K562 (cell line): ENCODE measurements at regions of chr6 and their contacts with region 1.

Region 1: GRCh38 chr6:107459283-107460082 is at the start of gene PDSS2:
- DNase-seq: peak; percentile 98 to 99 (median 98)
- ATAC-seq: peak; percentile 96
- H3K4me3 ChIP-seq: peak within 1 kb of the TSS; percentile 60
- H3K27ac ChIP-seq: peak within 1 kb of the TSS; percentile 91
- H3K4me1 ChIP-seq: peaks cover 5 to 10% of the 10 kb centered on the region in 2 experiments; a peak in 4 of 5 replicates
- H3K27me3 ChIP-seq: no peaks in the 10 kb centered on the region
- CTCF ChIP-seq: peak; percentile 72 to 80 (median 74)
- EP300 ChIP-seq: 0 out of 2 replicates have a peak, but pooled peaks have one; percentile 23
- POLR2A ChIP-seq: peak; percentile 91
- RAD21 ChIP-seq: peak; percentile 42 to 50
- polyA plus RNA-seq, gene PDSS2: 16.9 to 21.1 TPM

Region 2: GRCh38 chr6:107064579-107065065 is 394.9 kb before region 1 on chr6:
- CTCF ChIA-PET with region 1: no interaction called
- POLR2A ChIA-PET with region 1: no interaction called
- in situ Hi-C with region 1: no loop called
- intact Hi-C with region 1: no loop called
- DNase-seq: peak in 1 of 4 experiments; percentile 36
- ATAC-seq: peak; percentile 60
- H3K4me3 ChIP-seq: no peak overlapping the region
- H3K27ac ChIP-seq: no peak overlapping the region
- H3K4me1 ChIP-seq: peaks cover 0 to 9% of the 10 kb centered on the region in 2 experiments; a peak in 4 of 5 replicates
- H3K27me3 ChIP-seq: peaks cover 4 to 6% of the 10 kb centered on the region in 2 experiments; a peak in 4 of 5 replicates
- CTCF ChIP-seq: no peak
- EP300 ChIP-seq: no peak
- POLR2A ChIP-seq: no peak
- RAD21 ChIP-seq: no peak

Region 3: DNA sequence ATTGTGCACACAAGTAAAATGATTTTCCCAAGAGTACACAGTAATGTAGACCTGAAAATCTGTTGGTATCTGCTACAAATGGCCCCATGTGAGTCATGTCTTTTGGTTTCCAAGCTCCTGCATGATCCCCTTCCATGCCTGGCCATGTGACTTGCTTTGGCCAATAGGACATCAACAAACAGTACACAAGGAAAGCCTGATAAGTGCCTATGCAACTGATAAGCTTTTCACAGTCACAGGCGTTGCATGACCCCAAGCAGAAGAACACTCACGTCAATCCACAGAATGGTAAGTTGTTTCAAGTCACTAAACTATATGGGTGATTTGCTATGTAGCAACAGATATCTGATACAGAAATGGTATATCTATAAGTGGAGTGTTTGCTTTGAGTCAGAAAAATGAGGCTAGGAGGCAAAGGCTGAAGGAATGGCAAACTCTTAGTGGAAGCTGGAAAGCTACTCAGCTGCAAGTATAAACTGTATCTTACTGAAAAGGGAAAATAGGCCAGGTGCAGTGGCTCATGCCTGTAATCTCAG is 184.1 kb before region 1 on chr6:
- CTCF ChIA-PET with region 1: no interaction called
- POLR2A ChIA-PET with region 1: interaction called, 6 read pairs
- in situ Hi-C with region 1: no loop called
- intact Hi-C with region 1: loop called (anchors 5 kb)
- DNase-seq: peak; percentile 92 to 95 (median 94)
- ATAC-seq: peak; percentile 96
- H3K4me3 ChIP-seq: peak overlapping the region; percentile 8; the same call in 1 of the 2 replicates
- H3K27ac ChIP-seq: peak overlapping the region; percentile 78; the same call in 2 of the 3 replicates
- H3K4me1 ChIP-seq: peaks cover 25 to 31% of the 10 kb centered on the region in 2 experiments
- H3K27me3 ChIP-seq: no peaks in the 10 kb centered on the region
- CTCF ChIP-seq: no peak
- EP300 ChIP-seq: peak; percentile 84
- POLR2A ChIP-seq: no peak
- RAD21 ChIP-seq: no peak

Region 4: DNA sequence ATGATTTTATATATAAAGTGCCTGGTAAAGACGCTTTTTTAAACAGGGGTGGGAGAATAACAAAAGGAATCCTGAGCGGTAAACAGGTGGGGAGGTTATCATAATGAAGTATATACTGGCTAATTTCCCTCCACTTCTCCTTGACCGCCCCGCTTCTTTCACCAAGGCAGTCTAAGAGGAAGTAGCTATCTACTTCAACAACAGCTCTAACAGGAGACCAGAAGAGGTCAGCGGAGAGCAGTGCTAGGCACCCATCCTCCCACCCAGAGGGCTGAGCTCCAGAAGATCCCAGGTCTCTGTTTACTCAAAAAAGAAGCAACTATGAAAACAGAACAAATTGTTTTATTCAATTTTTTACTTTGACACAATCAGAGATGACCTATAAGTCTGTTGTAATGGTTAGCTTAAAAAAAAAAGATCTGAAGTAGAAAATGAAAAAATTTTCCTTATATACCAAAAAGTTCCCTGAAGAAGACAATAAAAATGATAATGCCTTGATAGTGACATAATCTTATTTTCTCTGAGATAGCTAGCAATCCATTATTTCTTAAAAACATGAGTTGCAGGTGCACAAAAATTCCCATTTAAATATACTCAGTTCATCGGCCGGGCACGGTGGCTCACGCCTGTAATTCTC is 141.3 kb before region 1 on chr6:
- CTCF ChIA-PET with region 1: no interaction called
- POLR2A ChIA-PET with region 1: interaction called, 4 read pairs
- in situ Hi-C with region 1: no loop called
- intact Hi-C with region 1: loop called (anchors 1 kb)
- DNase-seq: peak; percentile 43 to 76 (median 61)
- ATAC-seq: peak; percentile 100
- H3K4me3 ChIP-seq: no peak overlapping the region
- H3K27ac ChIP-seq: no peak overlapping the region
- H3K4me1 ChIP-seq: no peaks in the 10 kb centered on the region
- H3K27me3 ChIP-seq: no peaks in the 10 kb centered on the region
- CTCF ChIP-seq: peak; percentile 73 to 85 (median 80)
- EP300 ChIP-seq: no peak
- POLR2A ChIP-seq: no peak
- RAD21 ChIP-seq: peak; percentile 72 to 88

Region 5: DNA sequence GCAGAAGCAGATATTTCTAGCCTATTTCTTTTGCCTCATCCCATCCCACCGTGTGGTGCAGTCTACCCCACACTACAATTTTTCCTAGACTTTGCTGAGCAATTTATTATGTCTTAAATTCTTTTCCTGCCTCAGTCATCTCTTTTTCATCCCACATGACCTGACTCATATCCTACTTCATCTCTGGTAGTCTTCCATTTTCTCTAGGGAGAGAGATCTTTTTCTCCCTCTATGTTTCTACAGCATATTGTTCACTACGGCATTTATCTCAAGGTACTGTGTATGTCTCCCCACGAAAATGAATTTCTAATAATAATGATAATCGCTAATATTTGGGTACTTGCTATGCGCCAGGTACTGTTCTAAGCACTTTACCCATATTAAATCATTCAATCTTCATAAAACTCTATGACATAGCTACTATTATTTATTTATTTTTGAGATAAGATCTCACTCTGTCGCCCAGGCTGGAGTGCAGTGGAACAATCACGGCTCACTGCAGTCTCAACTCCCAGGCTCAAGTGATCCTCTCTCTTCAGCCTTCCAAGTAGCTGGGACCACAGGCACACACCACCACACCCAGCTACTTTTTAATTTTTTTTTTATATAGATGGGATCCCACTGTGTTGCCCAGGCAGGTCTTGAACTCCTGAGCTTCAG is 15.7 kb before region 1 on chr6:
- CTCF ChIA-PET with region 1: no interaction called
- POLR2A ChIA-PET with region 1: interaction called, 12 read pairs
- in situ Hi-C with region 1: no loop called
- intact Hi-C with region 1: no loop called
- DNase-seq: no peak
- ATAC-seq: no peak
- H3K4me3 ChIP-seq: no peak overlapping the region
- H3K27ac ChIP-seq: no peak overlapping the region
- H3K4me1 ChIP-seq: no peaks in the 10 kb centered on the region
- H3K27me3 ChIP-seq: no peaks in the 10 kb centered on the region
- CTCF ChIP-seq: no peak
- EP300 ChIP-seq: no peak
- POLR2A ChIP-seq: no peak
- RAD21 ChIP-seq: no peak

Region 6: GRCh38 chr6:107473660-107474059 is 14.2 kb after region 1 on chr6:
- CTCF ChIA-PET with region 1: no interaction called
- POLR2A ChIA-PET with region 1: interaction called, 18 read pairs
- in situ Hi-C with region 1: no loop called
- intact Hi-C with region 1: no loop called
- DNase-seq: no peak
- ATAC-seq: no peak
- H3K4me3 ChIP-seq: no peak overlapping the region
- H3K27ac ChIP-seq: no peak overlapping the region
- H3K4me1 ChIP-seq: no peaks in the 10 kb centered on the region
- H3K27me3 ChIP-seq: peaks cover 4 to 14% of the 10 kb centered on the region in 2 experiments; a peak in 3 of 5 replicates
- CTCF ChIP-seq: no peak
- EP300 ChIP-seq: no peak
- POLR2A ChIP-seq: no peak
- RAD21 ChIP-seq: no peak